Ascending aorta (tissue), 2 donors: ENCODE measurements at regions of chr3 and their contacts with region 1.

Region 1: DNA sequence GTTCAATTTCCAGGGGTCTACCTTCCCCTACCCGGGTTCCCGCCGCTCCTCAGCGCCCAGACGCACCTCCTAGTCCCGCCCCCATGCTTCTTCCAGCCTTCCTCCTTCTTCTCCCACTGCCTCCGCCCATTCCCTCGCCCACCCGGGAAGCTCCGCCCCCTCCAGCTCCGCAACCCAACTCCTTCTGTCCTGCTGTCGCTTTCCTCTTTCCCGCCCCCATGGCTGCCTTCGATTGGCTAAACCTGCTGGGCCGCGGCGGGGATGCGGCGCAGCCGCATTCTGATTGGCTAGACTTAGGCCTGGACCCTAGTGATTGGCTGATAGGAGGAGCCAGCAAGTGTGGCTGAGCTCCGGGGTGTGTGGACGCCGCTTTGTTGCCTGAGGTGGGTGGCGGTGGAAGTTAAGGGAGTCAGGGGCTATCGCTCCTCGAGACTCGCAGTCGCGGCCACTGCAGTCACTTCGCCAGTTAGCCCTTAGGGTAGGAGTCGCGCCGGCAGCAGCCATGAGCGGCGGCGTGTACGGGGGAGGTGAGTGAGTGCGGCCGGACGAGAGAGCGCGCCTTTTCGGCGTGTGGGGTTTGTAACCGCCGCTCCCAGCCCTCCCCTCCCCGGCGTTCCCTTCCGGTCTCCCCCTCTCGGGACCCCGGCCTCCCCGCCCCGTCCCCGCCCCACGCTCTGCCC is at the start of gene ACTL6A:
- DNase-seq: peak; percentile 100
- H3K4me3 ChIP-seq: peak within 1 kb of the TSS; percentile 78 to 85
- H3K27ac ChIP-seq: peak within 1 kb of the TSS; percentile 70 to 84
- H3K4me1 ChIP-seq: peaks cover 0 to 3% of the 10 kb centered on the region in 2 donors
- H3K27me3 ChIP-seq: no peaks in the 10 kb centered on the region
- CTCF ChIP-seq: no peak
- total RNA-seq, gene ACTL6A: 23.9 TPM

Region 2: GRCh38 chr3:179347345-179348194 is 215.2 kb before region 1 on chr3 and contains the start of gene MFN1:
- intact Hi-C with region 1: loop called (anchors 2 kb)
- DNase-seq: peak; percentile 90 to 98
- H3K4me3 ChIP-seq: peak within 1 kb of the TSS; percentile 75 to 93
- H3K27ac ChIP-seq: peak within 1 kb of the TSS; percentile 82 to 90
- H3K4me1 ChIP-seq: peaks cover 7 to 20% of the 10 kb centered on the region in 2 donors
- H3K27me3 ChIP-seq: no peaks in the 10 kb centered on the region
- CTCF ChIP-seq: no peak
- total RNA-seq, gene MFN1: 25.1 TPM

Region 3: GRCh38 chr3:179421500-179421899 is 141.2 kb before region 1 on chr3:
- intact Hi-C with region 1: loop called (anchors 1 kb)
- DNase-seq: peak in 1 of 2 donors; percentile 69
- H3K4me3 ChIP-seq: no peak overlapping the region
- H3K27ac ChIP-seq: peak overlapping the region in 1 of 2 donors; percentile 33
- H3K4me1 ChIP-seq: peaks cover 0 to 3% of the 10 kb centered on the region in 2 donors
- H3K27me3 ChIP-seq: no peaks in the 10 kb centered on the region
- CTCF ChIP-seq: peak; percentile 10 to 74 (median 48)

Region 4: GRCh38 chr3:179653096-179653797 is 90.5 kb after region 1 on chr3:
- intact Hi-C with region 1: loop called (anchors 2 kb)
- DNase-seq: peak in 1 of 2 donors; percentile 82
- H3K4me3 ChIP-seq: peak overlapping the region; percentile 90
- H3K27ac ChIP-seq: peak overlapping the region; percentile 88 to 92
- H3K4me1 ChIP-seq: no peaks in the 10 kb centered on the region
- H3K27me3 ChIP-seq: no peaks in the 10 kb centered on the region
- CTCF ChIP-seq: peak in 1 of 3 experiments; percentile 9